IMR-90 (cell line): ENCODE measurements at regions of chr1 and their contacts with region 1.

Region 1: GRCh38 chr1:145720877-145721671 is 1.8 kb downstream of the CD160 start:
- DNase-seq: peak; percentile 59
- ATAC-seq: peak; percentile 88
- H3K4me3 ChIP-seq: peak overlapping the region; percentile 23; the same call in 1 of the 2 replicates
- H3K27ac ChIP-seq: peak overlapping the region; percentile 62
- H3K4me1 ChIP-seq: peaks cover 27% of the 10 kb centered on the region
- H3K27me3 ChIP-seq: no peaks in the 10 kb centered on the region
- CTCF ChIP-seq: peak; percentile 83
- POLR2A ChIP-seq: peak; percentile 38
- RAD21 ChIP-seq: peak; percentile 81

Region 2: GRCh38 chr1:145823565-145824498 is 102.8 kb after region 1 on chr1 and contains the starts of genes POLR3C and RNF115:
- CTCF ChIA-PET with region 1: interaction called, 3 read pairs
- POLR2A ChIA-PET with region 1: no interaction called
- dilution Hi-C with region 1: no loop called
- in situ Hi-C with region 1: no loop called
- intact Hi-C with region 1: loop called (anchors 10 kb)
- DNase-seq: peak; percentile 90
- ATAC-seq: peak; percentile 94
- H3K4me3 ChIP-seq: peak within 1 kb of the TSS; percentile 53
- H3K27ac ChIP-seq: peak within 1 kb of the TSS; percentile 91
- H3K4me1 ChIP-seq: 0 out of 2 replicates have a peak, but pooled peaks cover 2% of the 10 kb centered on the region
- H3K27me3 ChIP-seq: no peaks in the 10 kb centered on the region
- CTCF ChIP-seq: no peak
- POLR2A ChIP-seq: peak; percentile 77
- RAD21 ChIP-seq: no peak
- total RNA-seq, gene POLR3C: 69.4 and 94.1 TPM in 2 replicates
- total RNA-seq, gene RNF115: 22.5 and 22.9 TPM in 2 replicates

Region 3: GRCh38 chr1:145858238-145858893 is 137.3 kb after region 1 on chr1:
- CTCF ChIA-PET with region 1: no interaction called
- POLR2A ChIA-PET with region 1: no interaction called
- dilution Hi-C with region 1: no loop called
- in situ Hi-C with region 1: no loop called
- intact Hi-C with region 1: no loop called
- DNase-seq: peak; percentile 19
- ATAC-seq: peak; percentile 36
- H3K4me3 ChIP-seq: peak overlapping the region; percentile 84
- H3K27ac ChIP-seq: peak overlapping the region; percentile 96
- H3K4me1 ChIP-seq: peaks cover 3% of the 10 kb centered on the region
- H3K27me3 ChIP-seq: no peaks in the 10 kb centered on the region
- CTCF ChIP-seq: no peak
- POLR2A ChIP-seq: no peak
- RAD21 ChIP-seq: no peak